Heart right ventricle (tissue), 16 donors: ENCODE measurements at regions of chr12 and their contacts with region 1.

Region 1: GRCh38 chr12:93127582-93128331 is 198.7 kb upstream of the EEA1 start:
- DNase-seq: peak; percentile 72 to 82
- ATAC-seq: peak; percentile 85 to 96 (median 92)
- H3K4me3 ChIP-seq: peak overlapping the region in 2 of 10 donors; percentile 2 to 3
- H3K27ac ChIP-seq: peak overlapping the region; percentile 74 to 89 (median 79)
- H3K4me1 ChIP-seq: peaks cover 2 to 45% (median 12%) of the 10 kb centered on the region in 9 donors
- H3K27me3 ChIP-seq: no peaks in the 10 kb centered on the region
- CTCF ChIP-seq: peak in 8 of 9 donors; percentile 15 to 49 (median 42)

Region 2: DNA sequence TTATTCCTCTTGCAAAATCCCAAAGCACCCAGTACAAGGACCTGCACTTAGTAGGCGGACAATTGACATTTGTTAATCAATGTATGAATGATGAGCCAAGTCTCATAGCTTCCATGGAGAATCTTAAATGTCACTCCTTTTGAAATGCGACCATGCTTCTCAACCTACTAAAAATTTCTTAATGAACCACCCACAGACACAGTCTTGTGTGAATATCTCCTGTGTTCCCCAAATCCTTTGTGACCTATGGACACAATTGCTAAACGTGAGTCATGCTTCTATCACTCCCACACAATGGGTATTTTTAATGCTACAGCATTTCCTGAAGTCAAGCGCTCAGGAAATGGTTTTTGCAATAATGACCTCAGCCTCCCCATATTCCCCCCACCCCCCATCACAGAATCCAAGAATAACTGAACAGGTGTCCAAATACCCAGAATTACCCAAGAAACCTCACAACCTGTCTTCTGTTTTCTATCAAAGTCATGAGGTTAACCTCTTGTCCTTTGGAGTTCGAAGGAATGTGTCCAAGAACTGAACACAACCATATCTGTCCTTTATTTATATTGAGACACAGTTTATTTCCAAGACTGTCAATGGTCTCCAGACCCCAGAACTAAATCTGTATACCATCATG is 588.5 kb before region 1 on chr12:
- intact Hi-C with region 1: no loop called
- DNase-seq: peak in 1 of 2 donors; percentile 60
- ATAC-seq: peak; percentile 70 to 92 (median 80)
- H3K4me3 ChIP-seq: no peak overlapping the region
- H3K27ac ChIP-seq: peak overlapping the region in 9 of 10 donors; percentile 40 to 81 (median 65)
- H3K4me1 ChIP-seq: peaks cover 10 to 66% (median 41%) of the 10 kb centered on the region in 9 donors
- H3K27me3 ChIP-seq: no peaks in the 10 kb centered on the region
- CTCF ChIP-seq: no peak

Region 3: DNA sequence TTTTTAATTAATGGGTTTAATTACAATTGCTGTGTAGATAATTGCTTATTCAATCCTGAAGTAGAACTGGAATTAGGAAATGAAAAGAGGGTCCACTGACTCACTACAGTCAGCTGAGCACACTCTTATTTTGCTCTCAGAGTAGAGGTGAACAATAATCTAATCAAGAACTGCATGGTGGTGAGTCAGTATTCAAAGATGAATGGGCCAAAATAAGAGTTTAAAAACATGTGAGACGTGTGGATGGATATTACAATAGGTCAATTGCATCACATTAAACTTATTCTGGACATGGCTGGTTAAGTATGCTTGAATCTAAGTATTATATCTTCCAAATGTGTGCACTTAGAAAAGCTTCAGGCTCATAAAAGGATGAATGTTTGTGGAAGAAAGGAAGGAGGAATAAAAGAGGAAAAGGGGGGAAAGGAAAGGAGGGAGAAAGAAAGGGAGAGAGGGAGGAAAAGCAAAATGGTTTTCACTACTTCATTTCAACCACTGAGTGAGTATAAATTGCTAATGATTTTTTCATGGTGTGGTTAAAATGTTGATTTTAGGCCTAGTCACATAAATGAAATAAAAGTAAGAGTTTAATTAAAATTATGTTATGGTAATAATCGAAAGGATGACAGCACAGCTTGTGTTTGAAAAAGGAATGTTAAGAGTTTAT is 171.6 kb before region 1 on chr12:
- intact Hi-C with region 1: no loop called
- DNase-seq: no peak
- ATAC-seq: no peak
- H3K4me3 ChIP-seq: no peak overlapping the region
- H3K27ac ChIP-seq: no peak overlapping the region
- H3K4me1 ChIP-seq: no peaks in the 10 kb centered on the region
- H3K27me3 ChIP-seq: no peaks in the 10 kb centered on the region
- CTCF ChIP-seq: no peak

Region 4: GRCh38 chr12:93060666-93061471 is 66.9 kb before region 1 on chr12:
- intact Hi-C with region 1: loop called in 2 of 10 experiments (anchors 1 to 5 kb)
- DNase-seq: peak in 1 of 2 donors; percentile 61
- ATAC-seq: peak; percentile 15 to 79 (median 74)
- H3K4me3 ChIP-seq: peak overlapping the region in 4 of 10 donors; percentile 4 to 13 (median 9)
- H3K27ac ChIP-seq: peak overlapping the region; percentile 61 to 88 (median 78)
- H3K4me1 ChIP-seq: peaks cover 14 to 36% (median 26%) of the 10 kb centered on the region in 9 donors
- H3K27me3 ChIP-seq: no peaks in the 10 kb centered on the region
- CTCF ChIP-seq: peak in 5 of 9 donors; percentile 12 to 33 (median 18)

Region 5: DNA sequence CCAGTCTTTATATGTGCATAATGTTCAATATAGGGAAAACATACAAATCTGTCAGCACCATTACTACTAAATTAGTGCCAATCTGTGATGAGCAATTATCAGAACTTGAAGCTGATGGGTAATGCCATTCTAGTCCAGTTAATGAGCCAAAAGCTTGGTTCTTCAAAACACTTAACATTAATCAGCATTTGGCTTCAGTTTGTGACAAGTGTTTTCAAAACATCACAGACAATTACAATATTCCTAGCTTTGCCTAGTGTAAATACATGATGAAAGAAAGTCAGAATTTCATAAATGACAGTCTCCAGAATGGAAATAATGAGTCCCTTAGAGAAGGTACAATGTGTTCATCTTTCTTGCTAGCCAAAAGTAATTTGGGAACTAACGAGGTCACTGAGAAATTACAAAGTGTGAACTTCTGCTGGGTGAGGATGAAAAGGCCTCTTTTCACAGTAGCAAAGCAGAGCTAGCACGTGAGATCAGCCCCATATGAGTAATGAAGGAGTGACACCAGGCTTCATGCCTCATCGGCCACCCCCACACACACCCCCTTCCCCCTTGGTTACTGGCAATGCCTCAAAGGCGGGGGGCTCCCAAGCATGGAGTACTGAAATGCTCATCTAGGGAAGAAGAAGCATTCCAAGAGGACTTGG is 18.1 kb before region 1 on chr12:
- intact Hi-C with region 1: loop called in 1 of 10 experiments (anchors 2 kb)
- DNase-seq: no peak
- ATAC-seq: peak in 4 of 8 donors; percentile 8 to 54 (median 16)
- H3K4me3 ChIP-seq: no peak overlapping the region
- H3K27ac ChIP-seq: peak overlapping the region in 4 of 10 donors; percentile 8 to 55 (median 36)
- H3K4me1 ChIP-seq: peaks cover 0 to 52% (median 31%) of the 10 kb centered on the region in 9 donors
- H3K27me3 ChIP-seq: no peaks in the 10 kb centered on the region
- CTCF ChIP-seq: no peak

Region 6: GRCh38 chr12:93174048-93174447 is 46.3 kb after region 1 on chr12:
- intact Hi-C with region 1: loop called in 2 of 10 experiments (anchors 2 kb)
- DNase-seq: peak in 1 of 2 donors; percentile 35
- ATAC-seq: peak; percentile 63 to 86 (median 74)
- H3K4me3 ChIP-seq: no peak overlapping the region
- H3K27ac ChIP-seq: peak overlapping the region; percentile 3 to 87 (median 76)
- H3K4me1 ChIP-seq: peaks cover 8 to 57% (median 36%) of the 10 kb centered on the region in 9 donors
- H3K27me3 ChIP-seq: no peaks in the 10 kb centered on the region
- CTCF ChIP-seq: no peak

Region 7: GRCh38 chr12:93183940-93184671 is 56.3 kb after region 1 on chr12:
- intact Hi-C with region 1: loop called in 2 of 10 experiments (anchors 2 to 5 kb)
- DNase-seq: peak in 1 of 2 donors; percentile 65
- ATAC-seq: peak; percentile 66 to 92 (median 86)
- H3K4me3 ChIP-seq: no peak overlapping the region
- H3K27ac ChIP-seq: peak overlapping the region; percentile 77 to 92 (median 88)
- H3K4me1 ChIP-seq: peaks cover 9 to 34% (median 24%) of the 10 kb centered on the region in 9 donors
- H3K27me3 ChIP-seq: no peaks in the 10 kb centered on the region
- CTCF ChIP-seq: no peak

Region 8: DNA sequence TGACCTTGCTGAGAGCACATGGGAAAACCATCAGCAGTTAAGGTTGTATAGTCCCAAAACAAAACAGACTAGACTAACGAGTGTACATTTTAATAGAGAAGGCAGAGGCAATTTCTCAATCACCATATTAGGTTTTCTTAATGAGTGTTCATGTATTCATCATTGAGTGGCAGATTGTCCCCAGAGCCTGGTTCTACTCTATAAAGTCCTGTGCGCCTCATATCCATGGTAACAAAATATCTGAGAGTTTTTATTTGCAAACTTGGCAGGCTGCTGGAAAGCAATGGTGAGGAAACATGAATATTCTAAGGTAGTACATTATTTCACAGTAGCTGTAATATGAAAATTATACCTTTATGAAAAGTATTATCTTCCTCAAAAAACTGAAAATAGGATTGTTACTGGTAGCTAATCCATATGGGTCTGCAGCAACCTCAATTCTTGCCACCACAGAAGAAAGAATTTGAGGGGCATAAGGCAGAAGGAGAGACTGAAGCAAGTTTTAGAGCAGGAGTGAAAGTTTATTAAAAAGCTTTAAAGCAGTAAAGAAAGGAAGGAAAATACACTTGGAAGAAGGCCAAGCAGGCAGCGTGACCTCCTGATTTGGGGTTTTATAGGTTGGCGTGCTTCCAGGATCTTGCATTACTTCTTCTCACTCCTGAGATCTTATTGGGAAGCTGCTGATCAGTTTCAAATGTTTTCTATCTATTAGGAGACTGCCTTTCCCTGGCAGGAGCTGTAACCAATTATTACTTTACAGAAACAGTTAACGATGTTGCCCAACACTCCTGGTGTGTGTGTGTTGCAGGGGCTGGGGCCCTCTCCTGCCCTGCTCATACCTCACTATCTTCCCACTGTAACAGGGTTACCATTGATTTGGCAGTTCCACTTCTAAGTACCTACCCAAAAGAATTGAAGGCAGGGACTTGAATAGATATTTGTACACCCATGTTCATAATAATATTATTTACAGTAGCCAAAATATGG is 96.0 kb after region 1 on chr12:
- intact Hi-C with region 1: loop called in 1 of 10 experiments (anchors 5 kb)
- DNase-seq: no peak
- ATAC-seq: peak in 3 of 8 donors; percentile 2 to 38 (median 28)
- H3K4me3 ChIP-seq: no peak overlapping the region
- H3K27ac ChIP-seq: peak overlapping the region in 2 of 10 donors; percentile 3 to 27
- H3K4me1 ChIP-seq: peaks cover 0 to 19% (median 6%) of the 10 kb centered on the region in 9 donors
- H3K27me3 ChIP-seq: no peaks in the 10 kb centered on the region
- CTCF ChIP-seq: no peak

Region 9: GRCh38 chr12:93336291-93336741 is 208.6 kb after region 1 on chr12:
- intact Hi-C with region 1: no loop called
- DNase-seq: peak in 1 of 2 donors; percentile 9
- ATAC-seq: peak in 3 of 8 donors; percentile 57 to 82 (median 65)
- H3K4me3 ChIP-seq: no peak overlapping the region
- H3K27ac ChIP-seq: peak overlapping the region in 4 of 10 donors; percentile 31 to 64 (median 52)
- H3K4me1 ChIP-seq: peaks cover 0 to 17% (median 0%) of the 10 kb centered on the region in 9 donors
- H3K27me3 ChIP-seq: no peaks in the 10 kb centered on the region
- CTCF ChIP-seq: no peak

Region 10: DNA sequence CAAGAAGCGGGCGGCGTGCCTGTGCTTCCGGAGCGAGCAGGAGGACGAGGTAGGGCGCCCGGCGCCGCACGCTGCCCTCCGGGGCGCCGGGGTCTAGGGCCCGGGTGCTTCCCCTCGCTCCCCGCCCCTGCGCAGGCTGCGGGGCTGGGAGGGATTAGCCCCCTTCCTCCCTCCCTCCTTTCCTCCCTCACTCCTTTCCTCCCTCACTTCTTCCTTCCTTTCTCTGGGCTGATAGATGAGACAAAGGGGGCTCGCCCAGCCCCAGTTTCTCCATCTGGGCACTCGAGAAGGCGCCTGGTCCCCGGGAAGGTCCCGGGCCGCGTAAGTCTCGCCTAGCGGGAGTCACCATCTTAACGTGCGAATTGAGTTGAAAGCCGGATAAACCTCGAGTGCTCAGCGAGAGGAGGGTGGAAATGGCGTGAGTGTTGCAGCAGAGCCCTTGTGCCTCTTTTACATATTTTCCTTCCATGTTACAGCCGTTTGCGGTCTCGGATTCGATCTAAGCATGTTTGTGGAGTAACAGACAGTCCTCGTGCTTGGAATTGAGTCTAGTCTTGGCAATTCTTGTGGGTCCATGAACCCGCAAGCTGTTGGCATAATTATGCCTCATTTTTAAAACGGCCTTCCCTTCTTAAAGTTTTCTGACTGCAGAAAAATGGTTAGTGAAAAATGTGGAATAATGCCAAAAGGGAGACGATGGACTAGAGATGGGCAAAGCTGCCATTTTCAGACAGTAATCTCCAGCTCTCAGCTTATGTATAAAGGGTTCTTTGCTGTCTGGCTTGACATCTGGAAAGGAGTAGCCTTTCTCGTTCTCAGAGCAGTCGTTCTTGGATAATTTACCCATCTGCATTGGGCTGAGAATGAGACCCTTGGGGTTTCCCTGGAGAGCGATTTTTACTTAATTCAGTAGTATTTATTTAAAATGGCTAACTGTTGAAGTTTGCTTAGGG is 250.9 kb after region 1 on chr12:
- intact Hi-C with region 1: loop called in 5 of 10 experiments (anchors 5 to 10 kb)
- DNase-seq: peak in 1 of 2 donors; percentile 36
- ATAC-seq: peak in 6 of 8 donors; percentile 1 to 10 (median 6)
- H3K4me3 ChIP-seq: peak overlapping the region; percentile 77 to 93 (median 84)
- H3K27ac ChIP-seq: peak overlapping the region; percentile 85 to 97 (median 94)
- H3K4me1 ChIP-seq: peaks cover 0 to 75% (median 44%) of the 10 kb centered on the region in 9 donors
- H3K27me3 ChIP-seq: no peaks in the 10 kb centered on the region
- CTCF ChIP-seq: no peak